ENCODE measurements at regions of chr22 and their contacts with region 1.

Region 1: GRCh38 chr22:38872172-38872830 is at the start of gene CBX6:
- DNase-seq: peak; percentile 94
- H3K4me3 Mint-ChIP-seq: peak within 1 kb of the TSS; percentile 96
- H3K27ac Mint-ChIP-seq: peak within 1 kb of the TSS; percentile 94
- H3K4me1 Mint-ChIP-seq: peaks cover 63% of the 10 kb centered on the region
- H3K27me3 Mint-ChIP-seq: no peaks in the 10 kb centered on the region
- total RNA-seq, gene CBX6: 91.4 to 93.5 TPM

Region 2: GRCh38 chr22:38705235-38706100 is 166.8 kb before region 1 on chr22 and contains the start of gene GTPBP1:
- CTCF ChIA-PET with region 1: interaction called, 4 read pairs
- intact Hi-C with region 1: loop called (anchors 1 kb)
- DNase-seq: peak; percentile 99
- H3K4me3 Mint-ChIP-seq: peak within 1 kb of the TSS; percentile 86
- H3K27ac Mint-ChIP-seq: peak within 1 kb of the TSS; percentile 92
- H3K4me1 Mint-ChIP-seq: peaks cover 47% of the 10 kb centered on the region
- H3K27me3 Mint-ChIP-seq: no peaks in the 10 kb centered on the region
- total RNA-seq, gene GTPBP1: 98.9 to 107 TPM

Region 3: DNA sequence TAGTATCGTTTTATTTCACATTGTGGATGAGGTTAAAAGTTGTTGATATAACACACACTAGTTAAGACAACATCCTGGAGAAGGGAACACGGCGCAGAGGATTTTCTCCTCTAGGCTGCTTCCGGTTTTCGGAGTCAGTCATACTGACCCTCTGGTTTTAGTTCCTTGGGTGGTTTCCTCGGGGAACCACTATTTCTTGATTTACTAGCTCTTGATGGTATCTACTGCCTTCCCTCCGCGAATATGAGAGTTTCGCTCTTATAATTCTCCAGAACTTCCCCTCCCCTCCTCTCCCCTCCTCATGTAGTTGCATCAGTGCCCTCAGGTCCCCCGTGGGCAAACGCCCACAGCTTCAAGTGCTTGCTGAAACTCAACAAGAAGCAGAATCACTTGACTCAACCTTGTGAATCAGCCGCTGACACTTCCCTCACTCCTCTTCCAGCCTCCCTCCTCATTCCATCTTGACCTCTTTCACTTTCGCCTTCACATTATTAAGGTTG is 69.2 kb after region 1 on chr22:
- CTCF ChIA-PET with region 1: interaction called, 10 read pairs
- intact Hi-C with region 1: loop called (anchors 1 kb)
- DNase-seq: peak; percentile 83
- H3K4me3 Mint-ChIP-seq: peak overlapping the region; percentile 39
- H3K27ac Mint-ChIP-seq: peak overlapping the region; percentile 83
- H3K4me1 Mint-ChIP-seq: peaks cover 36% of the 10 kb centered on the region
- H3K27me3 Mint-ChIP-seq: peaks cover 25% of the 10 kb centered on the region

Region 4: GRCh38 chr22:38981992-38982927 is 110.0 kb after region 1 on chr22 and contains the start of gene APOBEC3B:
- CTCF ChIA-PET with region 1: interaction called, 5 read pairs
- intact Hi-C with region 1: loop called (anchors 1 kb)
- DNase-seq: peak; percentile 87
- H3K4me3 Mint-ChIP-seq: peak within 1 kb of the TSS; percentile 60
- H3K27ac Mint-ChIP-seq: peak within 1 kb of the TSS; percentile 75
- H3K4me1 Mint-ChIP-seq: peaks cover 52% of the 10 kb centered on the region
- H3K27me3 Mint-ChIP-seq: no peaks in the 10 kb centered on the region
- total RNA-seq, gene APOBEC3B: 5.5 to 6.0 TPM

Region 5: GRCh38 chr22:39097098-39098020 is 225.1 kb after region 1 on chr22 and contains the start of gene APOBEC3H:
- CTCF ChIA-PET with region 1: interaction called, 3 read pairs
- intact Hi-C with region 1: loop called (anchors 1 kb)
- DNase-seq: peak; percentile 71
- H3K4me3 Mint-ChIP-seq: peak within 1 kb of the TSS; percentile 67
- H3K27ac Mint-ChIP-seq: peak within 1 kb of the TSS; percentile 84
- H3K4me1 Mint-ChIP-seq: peaks cover 74% of the 10 kb centered on the region
- H3K27me3 Mint-ChIP-seq: no peaks in the 10 kb centered on the region
- total RNA-seq, gene APOBEC3H: 11.9 to 13.2 TPM

Region 6: DNA sequence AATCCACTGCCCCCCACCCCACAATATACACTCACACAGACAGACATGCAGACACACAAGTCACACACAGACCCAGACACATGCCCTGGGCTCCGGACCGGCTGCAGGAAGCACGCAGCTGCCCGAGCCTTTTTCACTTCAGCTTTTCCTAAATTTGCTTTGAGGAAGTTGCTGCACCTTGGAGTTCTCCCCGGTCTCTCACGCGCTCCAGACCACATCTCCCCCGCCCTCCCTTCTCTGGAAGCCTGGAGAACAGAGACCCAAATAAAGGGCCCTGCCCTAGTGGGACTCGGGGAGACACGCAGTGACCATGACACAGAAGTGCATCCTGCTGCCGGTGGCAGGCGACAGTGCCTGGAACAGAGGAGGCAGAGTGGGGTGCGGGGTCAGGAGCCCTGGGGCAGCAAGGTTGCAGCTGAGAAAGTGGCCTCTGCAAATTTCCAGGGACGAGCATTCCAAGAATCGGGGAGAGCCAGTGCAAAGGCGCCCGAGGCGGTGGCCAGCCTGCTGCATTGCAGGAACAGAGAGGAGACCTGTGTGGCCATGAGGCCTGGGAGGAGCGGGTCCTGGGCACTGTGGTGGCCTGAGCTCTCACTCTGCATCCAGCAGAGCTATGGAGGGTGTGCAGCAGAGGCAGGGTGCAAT is 428.0 kb after region 1 on chr22:
- CTCF ChIA-PET with region 1: no interaction called
- intact Hi-C with region 1: no loop called
- DNase-seq: no peak
- H3K4me3 Mint-ChIP-seq: no peak overlapping the region
- H3K27ac Mint-ChIP-seq: no peak overlapping the region
- H3K4me1 Mint-ChIP-seq: peaks cover 3% of the 10 kb centered on the region
- H3K27me3 Mint-ChIP-seq: peaks cover 24% of the 10 kb centered on the region

Region 7: GRCh38 chr22:39319270-39320022 is 447.1 kb after region 1 on chr22 and contains the start of gene RPL3:
- CTCF ChIA-PET with region 1: interaction called, 3 read pairs
- intact Hi-C with region 1: loop called (anchors 1 kb)
- DNase-seq: peak; percentile 94
- H3K4me3 Mint-ChIP-seq: peak within 1 kb of the TSS; percentile 99
- H3K27ac Mint-ChIP-seq: peak within 1 kb of the TSS; percentile 100
- H3K4me1 Mint-ChIP-seq: peaks cover 42% of the 10 kb centered on the region
- H3K27me3 Mint-ChIP-seq: no peaks in the 10 kb centered on the region
- total RNA-seq, gene RPL3: 3,434 to 3,511 TPM